OCI-LY7 (cell line): ENCODE measurements at regions of chrX and their contacts with region 1.

Region 1: GRCh38 chrX:17046478-17047097 is 100.1 kb downstream of the REPS2 start:
- DNase-seq: peak; percentile 71
- H3K4me3 ChIP-seq: no peak overlapping the region
- H3K27ac ChIP-seq: no peak overlapping the region
- H3K4me1 ChIP-seq: peaks cover 3% of the 10 kb centered on the region
- CTCF ChIP-seq: peak; percentile 82

Region 2: DNA sequence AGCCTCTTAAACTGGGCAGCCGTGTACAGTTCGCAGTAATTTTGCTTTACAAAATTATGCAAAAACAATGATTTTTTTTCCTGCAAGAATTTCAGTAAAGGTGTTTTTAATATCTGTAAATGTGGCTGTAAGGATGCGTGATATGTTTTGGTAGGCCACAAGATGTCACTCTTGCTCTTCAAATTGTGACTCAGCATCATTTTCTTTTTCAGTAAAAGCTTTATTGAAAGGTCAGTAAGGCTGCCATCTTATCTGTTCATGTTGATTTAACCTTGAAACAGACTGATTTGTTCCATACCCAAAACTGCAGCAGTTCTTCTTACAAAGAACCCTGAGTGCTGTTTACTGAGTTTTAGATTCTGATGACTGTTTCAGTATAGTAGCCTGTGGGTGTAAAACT is 220.4 kb before region 1 on chrX:
- CTCF ChIA-PET with region 1: interaction called, 5 read pairs
- POLR2A ChIA-PET with region 1: interaction called, 4 read pairs
- intact Hi-C with region 1: loop called (anchors 5 kb)
- DNase-seq: peak; percentile 45
- H3K4me3 ChIP-seq: no peak overlapping the region
- H3K27ac ChIP-seq: peak overlapping the region; percentile 15
- H3K4me1 ChIP-seq: no peaks in the 10 kb centered on the region
- CTCF ChIP-seq: peak; percentile 76

Region 3: GRCh38 chrX:17007206-17007683 is 39.3 kb before region 1 on chrX:
- CTCF ChIA-PET with region 1: interaction called, 6 read pairs
- POLR2A ChIA-PET with region 1: interaction called, 3 read pairs
- intact Hi-C with region 1: loop called (anchors 1 kb)
- DNase-seq: peak; percentile 47
- H3K4me3 ChIP-seq: no peak overlapping the region
- H3K27ac ChIP-seq: no peak overlapping the region
- H3K4me1 ChIP-seq: no peaks in the 10 kb centered on the region
- CTCF ChIP-seq: peak; percentile 70

Region 4: DNA sequence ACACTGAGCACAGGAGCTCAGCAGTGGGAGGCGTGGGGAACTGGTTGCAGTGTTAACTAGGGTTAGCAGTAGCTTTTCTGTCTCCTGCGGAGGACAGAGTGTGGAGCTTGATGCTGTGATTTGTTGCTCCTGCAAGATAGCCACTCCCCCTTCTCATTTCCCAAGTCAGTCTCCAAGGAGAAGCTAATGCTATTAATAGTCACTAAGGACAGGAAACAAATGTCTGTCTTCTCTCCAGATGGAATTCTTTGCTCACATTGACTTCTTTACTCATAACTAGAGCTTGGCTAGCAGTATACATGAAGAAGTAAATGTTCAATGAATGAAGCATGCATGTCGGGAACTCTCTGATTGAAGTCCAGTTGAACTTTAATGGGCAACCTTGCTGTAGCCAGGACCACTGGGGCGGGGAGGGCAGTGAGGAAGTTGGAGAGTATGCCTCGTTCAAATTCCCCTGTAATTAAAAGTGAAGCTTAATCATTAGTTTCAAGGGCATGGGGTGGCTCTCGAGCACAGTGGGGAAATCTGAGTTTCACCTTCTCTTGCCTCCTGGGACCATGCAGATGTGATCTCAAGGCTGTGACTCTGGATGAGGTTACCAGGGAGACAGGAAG is 534.1 kb after region 1 on chrX:
- CTCF ChIA-PET with region 1: no interaction called
- POLR2A ChIA-PET with region 1: no interaction called
- intact Hi-C with region 1: no loop called
- DNase-seq: no peak
- H3K4me3 ChIP-seq: no peak overlapping the region
- H3K27ac ChIP-seq: no peak overlapping the region
- H3K4me1 ChIP-seq: no peaks in the 10 kb centered on the region
- CTCF ChIP-seq: no peak